ENCODE measurements at regions of chr10 and their contacts with region 1.

Region 1: GRCh38 chr10:48722153-48723145 is 37.8 kb downstream of the WDFY4 start:
- DNase-seq: no peak
- ATAC-seq: no peak
- H3K4me3 ChIP-seq: no peak overlapping the region
- H3K27ac ChIP-seq: no peak overlapping the region
- H3K4me1 ChIP-seq: no peaks in the 10 kb centered on the region
- H3K27me3 ChIP-seq: no peaks in the 10 kb centered on the region
- CTCF ChIP-seq: no peak
- EP300 ChIP-seq: no peak
- POLR2A ChIP-seq: no peak
- RAD21 ChIP-seq: no peak

Region 2: DNA sequence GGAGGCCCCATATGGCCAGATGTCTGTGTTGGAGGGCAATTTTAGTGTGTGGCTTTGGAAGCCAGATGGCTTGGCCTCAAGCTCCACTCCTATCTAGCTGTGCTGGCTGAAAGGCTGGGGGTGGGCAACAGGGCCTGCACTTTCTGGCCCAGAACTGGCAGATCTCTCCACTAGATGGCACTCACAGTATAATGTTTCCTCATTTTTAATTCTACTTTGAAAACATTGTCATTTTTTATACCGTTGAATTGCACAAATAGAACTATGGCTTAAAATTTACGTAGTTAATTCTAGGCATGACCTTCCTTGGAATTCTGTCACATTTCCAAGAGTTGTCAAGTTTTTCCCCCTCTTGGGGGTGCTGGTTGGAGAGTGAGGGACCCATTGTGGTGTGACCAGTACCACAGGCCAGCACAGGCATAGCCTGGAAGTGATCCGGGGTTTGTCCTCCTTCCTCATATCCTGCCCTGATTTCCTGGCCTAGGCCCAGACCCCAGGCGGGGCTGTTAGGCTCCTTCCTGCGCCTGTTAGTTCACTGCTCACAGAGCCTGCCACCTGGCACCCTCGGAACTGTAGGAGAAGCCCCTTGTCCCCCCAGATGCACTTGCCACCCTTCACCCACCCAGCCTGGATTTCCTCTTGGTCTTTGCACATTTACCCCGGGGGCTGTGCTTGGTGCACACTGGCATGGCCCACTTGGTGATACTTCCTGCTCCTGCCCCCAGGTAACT is 170.4 kb before region 1 on chr10:
- CTCF ChIA-PET with region 1: interaction called, 3 read pairs
- POLR2A ChIA-PET with region 1: no interaction called
- RAD21 ChIA-PET with region 1: no interaction called
- SMC1A ChIA-PET with region 1: no interaction called
- in situ Hi-C with region 1: loop called (anchors 5 kb)
- intact Hi-C with region 1: no loop called
- DNase-seq: no peak
- ATAC-seq: peak; percentile 93
- H3K4me3 ChIP-seq: no peak overlapping the region
- H3K27ac ChIP-seq: no peak overlapping the region
- H3K4me1 ChIP-seq: no peaks in the 10 kb centered on the region
- H3K27me3 ChIP-seq: no peaks in the 10 kb centered on the region; a peak in 1 of 4 replicates
- CTCF ChIP-seq: peak; percentile 60 to 84 (median 78)
- EP300 ChIP-seq: no peak
- POLR2A ChIP-seq: no peak
- RAD21 ChIP-seq: peak; percentile 80

Region 3: GRCh38 chr10:48792687-48793096 is 70.2 kb after region 1 on chr10:
- CTCF ChIA-PET with region 1: no interaction called
- POLR2A ChIA-PET with region 1: no interaction called
- RAD21 ChIA-PET with region 1: no interaction called
- SMC1A ChIA-PET with region 1: no interaction called
- in situ Hi-C with region 1: no loop called
- intact Hi-C with region 1: no loop called
- DNase-seq: no peak
- ATAC-seq: no peak
- H3K4me3 ChIP-seq: no peak overlapping the region
- H3K27ac ChIP-seq: no peak overlapping the region
- H3K4me1 ChIP-seq: no peaks in the 10 kb centered on the region
- H3K27me3 ChIP-seq: no peaks in the 10 kb centered on the region
- CTCF ChIP-seq: no peak
- EP300 ChIP-seq: no peak
- POLR2A ChIP-seq: no peak
- RAD21 ChIP-seq: no peak